ENCODE measurements at regions of chr10 and their contacts with region 1.

Region 1: DNA sequence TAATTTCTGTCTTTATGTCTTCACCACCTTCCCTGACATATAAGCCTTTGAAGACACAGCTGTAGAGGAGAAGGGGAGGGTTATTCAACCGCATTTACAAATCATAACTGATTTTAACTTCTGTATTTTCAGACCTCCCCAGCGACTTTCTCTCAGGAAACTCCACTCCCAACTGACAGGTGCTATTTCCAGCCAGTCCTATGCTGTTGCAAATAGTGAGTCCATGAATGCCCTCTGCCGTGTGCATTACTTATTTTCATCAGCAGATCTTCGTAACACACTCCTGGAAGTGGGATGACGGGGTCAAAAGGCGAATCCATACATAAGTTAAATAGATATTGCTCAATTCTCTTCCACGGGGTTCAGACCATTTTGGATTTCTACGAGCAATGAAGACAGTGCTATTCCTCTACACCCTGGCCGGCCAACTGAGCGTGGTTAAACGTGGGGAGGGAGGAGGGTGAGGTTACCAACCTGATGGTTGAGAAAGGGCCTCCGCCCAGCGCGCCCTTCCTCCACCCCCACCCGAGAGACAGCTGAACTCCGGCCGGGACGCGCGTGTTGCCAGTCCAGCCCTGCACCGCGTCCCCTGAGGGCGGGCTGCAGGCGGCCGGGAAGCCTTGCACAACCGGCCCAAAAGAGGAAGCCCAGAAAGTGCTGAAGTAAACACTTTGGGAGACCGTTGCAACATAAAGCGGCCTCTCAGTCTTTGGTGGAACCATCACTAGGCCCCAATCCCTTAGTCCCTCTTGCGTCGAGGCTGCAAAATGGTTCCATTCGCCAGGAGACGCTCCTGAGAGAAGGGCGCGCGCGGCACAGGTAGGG is at the start of gene APBB1IP:
- DNase-seq: peak; percentile 24 to 60 (median 47)
- ATAC-seq: peak; percentile 73
- H3K4me3 ChIP-seq: peak within 1 kb of the TSS; percentile 95
- H3K4me3 Mint-ChIP-seq: peak within 1 kb of the TSS; percentile 80 to 98 (median 95)
- H3K27ac ChIP-seq: peak within 1 kb of the TSS; percentile 91
- H3K27ac Mint-ChIP-seq: peak within 1 kb of the TSS; percentile 91 to 98 (median 97)
- H3K4me1 ChIP-seq: peaks cover 16 to 35% of the 10 kb centered on the region in 2 donors
- H3K4me1 Mint-ChIP-seq: peaks cover 40 to 62% (median 57%) of the 10 kb centered on the region in 7 donors
- H3K27me3 ChIP-seq: no peaks in the 10 kb centered on the region
- H3K27me3 Mint-ChIP-seq: no peaks in the 10 kb centered on the region
- total RNA-seq, gene APBB1IP: 64.7 to 101 (median 88.0) TPM

Region 2: GRCh38 chr10:25016376-25017154 is 1421.3 kb before region 1 on chr10 and contains the start of gene THNSL1:
- CTCF ChIA-PET with region 1: no interaction called
- POLR2A ChIA-PET with region 1: no interaction called
- intact Hi-C with region 1: loop called in 1 of 2 experiments (anchors 5 kb)
- DNase-seq: peak; percentile 90 to 99 (median 96)
- ATAC-seq: peak; percentile 97
- H3K4me3 ChIP-seq: peak within 1 kb of the TSS; percentile 76
- H3K4me3 Mint-ChIP-seq: peak within 1 kb of the TSS; percentile 87 to 98 (median 90)
- H3K27ac ChIP-seq: peak within 1 kb of the TSS; percentile 82
- H3K27ac Mint-ChIP-seq: peak within 1 kb of the TSS; percentile 91 to 99 (median 94)
- H3K4me1 ChIP-seq: peaks cover 0 to 8% of the 10 kb centered on the region in 2 donors
- H3K4me1 Mint-ChIP-seq: peaks cover 11 to 43% (median 32%) of the 10 kb centered on the region in 7 donors
- H3K27me3 ChIP-seq: no peaks in the 10 kb centered on the region
- H3K27me3 Mint-ChIP-seq: peaks cover 0 to 10% (median 0%) of the 10 kb centered on the region in 5 donors
- total RNA-seq, gene THNSL1: 1.4 to 10.6 (median 2.5) TPM

Region 3: GRCh38 chr10:26448706-26449435 is 11.0 kb after region 1 on chr10:
- CTCF ChIA-PET with region 1: no interaction called
- POLR2A ChIA-PET with region 1: interaction called, 10 read pairs
- intact Hi-C with region 1: loop called (anchors 1 kb)
- DNase-seq: peak; percentile 23 to 91 (median 89)
- ATAC-seq: peak; percentile 89
- H3K4me3 ChIP-seq: peak overlapping the region; percentile 31
- H3K4me3 Mint-ChIP-seq: peak overlapping the region; percentile 71 to 92 (median 84)
- H3K27ac ChIP-seq: peak overlapping the region; percentile 76
- H3K27ac Mint-ChIP-seq: peak overlapping the region; percentile 93 to 99 (median 97)
- H3K4me1 ChIP-seq: peaks cover 57 to 70% of the 10 kb centered on the region in 2 donors
- H3K4me1 Mint-ChIP-seq: peaks cover 60 to 97% (median 90%) of the 10 kb centered on the region in 7 donors
- H3K27me3 ChIP-seq: no peaks in the 10 kb centered on the region
- H3K27me3 Mint-ChIP-seq: no peaks in the 10 kb centered on the region

Region 4: DNA sequence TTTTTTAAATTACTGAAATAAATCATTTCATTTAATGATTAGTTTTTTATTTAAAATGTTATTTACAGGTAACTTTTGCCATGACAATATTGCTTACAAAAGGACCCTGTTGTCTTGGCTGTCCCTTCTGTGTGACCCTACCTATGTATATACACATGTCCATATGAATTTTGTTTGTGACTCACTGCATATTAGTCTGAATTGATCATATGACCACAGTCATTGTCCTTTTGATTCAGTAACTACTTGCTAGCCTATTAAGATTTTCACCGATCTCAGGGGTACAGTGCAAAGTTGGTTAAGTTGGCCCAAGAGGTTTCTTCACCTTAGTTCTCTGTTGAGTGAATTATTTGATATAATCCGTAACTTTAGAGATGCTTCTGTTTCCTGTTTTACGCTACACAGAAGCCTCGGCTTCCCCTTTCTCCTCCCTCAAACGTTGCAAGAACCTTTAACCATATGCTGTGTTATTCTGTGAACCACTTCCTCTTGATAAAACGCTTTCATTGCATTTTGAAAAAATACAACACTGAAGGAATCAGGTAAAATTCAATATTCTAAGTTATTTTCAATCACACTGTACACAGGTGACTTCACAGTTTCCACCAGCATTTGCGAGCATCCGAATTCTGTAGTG is 44.2 kb after region 1 on chr10:
- CTCF ChIA-PET with region 1: interaction called, 7 read pairs
- POLR2A ChIA-PET with region 1: interaction called, 24 read pairs
- intact Hi-C with region 1: loop called (anchors 1 kb)
- DNase-seq: peak in 7 of 9 donors; percentile 65 to 90 (median 84)
- ATAC-seq: peak; percentile 91
- H3K4me3 ChIP-seq: peak overlapping the region; percentile 46
- H3K4me3 Mint-ChIP-seq: peak overlapping the region; percentile 68 to 88 (median 76)
- H3K27ac ChIP-seq: peak overlapping the region; percentile 71
- H3K27ac Mint-ChIP-seq: peak overlapping the region; percentile 85 to 97 (median 95)
- H3K4me1 ChIP-seq: peaks cover 81 to 85% of the 10 kb centered on the region in 2 donors
- H3K4me1 Mint-ChIP-seq: peaks cover 60 to 85% (median 79%) of the 10 kb centered on the region in 7 donors
- H3K27me3 ChIP-seq: no peaks in the 10 kb centered on the region
- H3K27me3 Mint-ChIP-seq: no peaks in the 10 kb centered on the region

Region 5: DNA sequence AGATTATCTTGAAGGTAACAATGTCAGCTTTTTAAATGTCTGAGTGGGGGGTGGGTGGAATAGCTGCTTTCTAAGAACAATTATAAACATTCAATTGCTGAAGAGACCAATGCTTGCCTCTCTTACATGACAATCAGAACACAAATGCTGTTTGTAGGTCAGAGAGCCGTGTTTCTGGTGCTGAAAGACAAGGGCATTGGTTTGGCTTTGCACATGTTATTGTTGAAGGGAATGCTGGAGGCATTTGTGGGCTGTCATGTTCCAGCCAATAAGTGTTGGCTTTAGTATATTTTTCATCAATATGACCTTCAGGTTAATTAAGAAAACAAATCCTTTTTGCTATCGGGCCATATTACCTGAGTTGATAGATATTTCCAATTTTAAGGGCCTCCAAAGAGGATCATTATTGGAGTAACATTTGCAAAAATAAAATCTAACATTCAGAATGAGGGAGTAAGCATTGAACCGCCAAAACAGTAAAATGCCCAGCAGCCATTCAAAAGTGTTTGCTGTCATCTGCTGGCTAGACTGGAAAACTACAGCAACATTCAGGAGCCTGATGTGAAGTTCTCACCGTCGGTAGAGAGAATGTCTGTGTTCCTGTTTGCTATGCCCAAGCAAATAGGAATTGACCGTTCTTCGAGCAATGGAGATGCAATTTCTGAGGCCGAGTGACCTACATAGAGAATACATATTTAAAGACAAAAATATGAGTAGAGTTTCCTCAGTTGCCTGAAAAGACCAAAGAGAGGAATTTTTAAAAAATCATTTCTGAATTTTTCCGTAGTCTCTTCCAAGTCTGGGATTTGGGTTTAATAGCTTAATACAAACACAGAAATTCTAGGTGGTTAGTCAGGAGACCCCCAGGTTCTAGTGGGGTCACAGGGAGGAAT is 119.1 kb after region 1 on chr10:
- CTCF ChIA-PET with region 1: interaction called, 5 read pairs
- POLR2A ChIA-PET with region 1: interaction called, 3 read pairs
- intact Hi-C with region 1: loop called (anchors 2 to 5 kb)
- DNase-seq: peak in 7 of 9 donors; percentile 15 to 62 (median 57)
- ATAC-seq: peak; percentile 70
- H3K4me3 ChIP-seq: no peak overlapping the region
- H3K4me3 Mint-ChIP-seq: no peak overlapping the region
- H3K27ac ChIP-seq: peak overlapping the region; percentile 24
- H3K27ac Mint-ChIP-seq: peak overlapping the region; percentile 25 to 91 (median 63)
- H3K4me1 ChIP-seq: no peaks in the 10 kb centered on the region
- H3K4me1 Mint-ChIP-seq: peaks cover 11 to 38% (median 29%) of the 10 kb centered on the region in 7 donors
- H3K27me3 ChIP-seq: no peaks in the 10 kb centered on the region
- H3K27me3 Mint-ChIP-seq: no peaks in the 10 kb centered on the region

Region 6: GRCh38 chr10:27155066-27155754 is 717.4 kb after region 1 on chr10 and contains the start of gene MASTL:
- CTCF ChIA-PET with region 1: no interaction called
- POLR2A ChIA-PET with region 1: no interaction called
- intact Hi-C with region 1: loop called (anchors 1 to 5 kb)
- DNase-seq: peak; percentile 93 to 97 (median 96)
- ATAC-seq: peak; percentile 89
- H3K4me3 ChIP-seq: peak within 1 kb of the TSS; percentile 90
- H3K4me3 Mint-ChIP-seq: peak within 1 kb of the TSS; percentile 91 to 100 (median 99)
- H3K27ac ChIP-seq: peak within 1 kb of the TSS; percentile 99
- H3K27ac Mint-ChIP-seq: peak within 1 kb of the TSS; percentile 100
- H3K4me1 ChIP-seq: peaks cover 13 to 17% of the 10 kb centered on the region in 2 donors
- H3K4me1 Mint-ChIP-seq: peaks cover 34 to 60% (median 50%) of the 10 kb centered on the region in 7 donors
- H3K27me3 ChIP-seq: no peaks in the 10 kb centered on the region
- H3K27me3 Mint-ChIP-seq: peaks cover 0 to 2% (median 0%) of the 10 kb centered on the region in 5 donors
- total RNA-seq, gene MASTL: 8.4 to 29.0 (median 20.2) TPM

Measured in naive thymus-derived CD4-positive, alpha-beta T cell (primary cell).